Posterior cingulate gyrus (tissue), 11 donors: ENCODE measurements at regions of chr5 and their contacts with region 1.

Region 1: DNA sequence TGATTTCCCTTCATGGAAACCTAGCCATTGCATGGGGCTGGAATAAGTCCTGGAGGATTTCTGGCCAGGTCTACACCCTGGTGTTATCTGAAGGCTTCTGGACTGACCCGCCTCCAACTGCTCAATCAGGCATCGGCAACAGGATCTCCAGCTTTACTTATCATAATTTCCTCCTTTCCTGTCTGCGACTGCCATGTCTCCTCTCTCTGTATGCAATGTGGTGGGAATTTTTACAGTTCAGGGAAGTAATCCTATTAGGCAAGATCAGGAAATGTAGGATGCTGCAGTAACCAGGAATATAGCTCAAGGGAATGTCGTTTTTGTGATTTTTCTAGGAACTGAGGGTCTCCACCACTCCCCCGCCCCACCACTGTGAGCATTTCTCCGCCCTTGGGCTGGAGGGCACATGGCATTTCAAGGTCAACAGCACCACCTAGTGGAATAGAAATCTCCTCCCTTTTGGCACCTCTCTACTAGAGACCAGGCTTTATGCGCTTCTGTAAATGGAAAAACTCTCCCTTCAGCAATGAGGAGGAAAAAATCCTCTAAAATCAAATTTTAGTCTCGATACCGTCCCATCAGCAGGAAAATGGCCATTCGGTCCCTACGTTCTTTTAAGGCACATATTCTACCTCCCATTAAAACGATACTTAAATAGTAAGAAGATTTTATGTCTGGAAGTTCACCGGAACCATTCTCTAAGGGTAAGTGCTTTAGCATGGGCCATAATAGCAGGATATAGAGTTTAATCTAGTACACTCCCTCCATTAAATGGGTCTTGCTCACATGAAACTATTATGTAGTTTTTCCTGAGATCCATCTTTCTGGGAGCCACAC is 93.0 kb downstream of the YTHDC2 start:
- DNase-seq: peak in 7 of 10 donors; percentile 15 to 83 (median 44)

Region 2: DNA sequence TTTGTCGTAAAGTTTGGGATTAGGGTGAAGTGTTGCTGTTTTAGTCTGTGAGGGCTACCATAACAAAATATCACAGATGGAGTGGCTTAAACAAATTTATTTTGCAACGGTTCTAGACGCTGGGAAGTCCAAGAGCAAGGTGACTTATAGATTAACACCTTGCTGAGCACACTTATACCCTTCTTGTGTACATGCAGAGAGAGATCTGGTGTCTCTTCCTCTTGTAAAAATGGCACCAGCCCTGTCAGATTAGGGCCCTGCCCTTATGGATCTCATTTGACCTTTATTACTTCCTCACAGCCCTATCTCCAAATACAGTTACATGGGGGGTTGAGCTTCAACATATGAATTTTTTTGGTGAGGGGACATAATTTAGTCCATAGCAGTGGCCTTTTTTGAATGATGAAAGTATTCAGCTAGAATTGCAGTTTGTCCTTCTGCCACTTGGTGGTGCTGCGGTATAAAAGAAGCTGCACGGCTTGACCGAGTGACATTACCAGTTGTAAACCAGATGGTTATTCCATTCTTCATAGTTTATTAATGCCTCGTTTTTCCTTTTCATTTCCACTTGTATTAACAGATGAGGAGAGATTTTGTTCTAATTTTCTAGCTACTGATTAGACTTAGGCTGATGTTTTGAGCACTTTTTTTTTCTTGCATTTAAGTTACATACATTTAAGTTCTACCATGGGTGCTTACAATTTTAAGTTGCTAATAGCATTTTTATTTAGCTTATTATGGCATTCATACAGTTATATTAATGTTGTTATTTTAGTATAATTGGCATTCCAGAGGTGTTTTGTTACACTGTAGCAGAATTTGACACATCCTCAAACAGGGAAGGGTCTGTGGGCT is 610.5 kb before region 1 on chr5:
- intact Hi-C with region 1: loop called (anchors 1 kb)
- DNase-seq: peak in 8 of 10 donors; percentile 40 to 93 (median 76)

Region 3: DNA sequence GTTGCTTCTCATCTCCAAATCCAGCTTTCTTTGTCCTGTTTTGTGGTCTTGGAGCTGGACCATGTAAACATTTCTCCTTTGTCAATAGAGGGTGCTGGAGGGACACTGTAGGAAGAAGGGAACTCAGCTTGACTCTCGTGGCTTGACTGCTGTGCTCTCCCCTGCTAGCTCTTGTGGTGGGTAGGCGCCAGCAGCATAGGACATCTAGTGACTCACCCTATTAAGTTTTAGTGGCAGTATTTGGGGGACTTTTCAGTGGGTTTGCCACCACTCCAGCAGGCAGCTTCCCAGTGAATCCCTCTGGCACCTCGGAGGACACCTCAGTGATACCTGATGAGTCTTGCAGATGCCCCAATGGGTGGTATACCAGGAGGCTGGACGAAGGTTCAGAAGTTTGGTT is 269.5 kb before region 1 on chr5:
- intact Hi-C with region 1: loop called (anchors 1 kb)
- DNase-seq: peak in 2 of 10 donors; percentile 11 to 68

Region 4: GRCh38 chr5:113378959-113379541 is 227.5 kb before region 1 on chr5:
- intact Hi-C with region 1: loop called (anchors 1 kb)
- DNase-seq: peak in 6 of 10 donors; percentile 31 to 85 (median 61)